HEK293 (cell line): ENCODE measurements at regions of chr7 and their contacts with region 1.

Region 1: DNA sequence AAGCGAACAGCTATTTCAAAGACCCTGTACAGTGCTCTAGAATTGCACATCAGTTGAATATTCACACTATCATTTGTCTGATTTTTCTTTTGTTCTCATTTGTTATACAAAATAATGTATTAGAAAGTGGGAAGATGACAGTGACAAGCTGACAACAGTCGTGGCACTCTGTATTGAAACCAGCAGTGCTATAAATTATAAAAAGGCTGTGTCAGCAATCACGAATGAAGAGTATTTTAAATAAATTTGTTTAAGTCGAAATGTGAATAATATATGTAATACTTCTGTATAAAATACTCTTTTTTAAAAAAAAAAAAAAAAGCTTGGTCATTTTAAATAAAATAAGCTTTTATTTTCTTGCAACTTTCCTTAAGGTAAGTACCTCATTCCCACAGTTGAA is 122.6 kb downstream of the VPS50 start:
- H3K4me3 ChIP-seq: no peak overlapping the region
- H3K27ac ChIP-seq: no peak overlapping the region
- H3K4me1 ChIP-seq: peaks cover 4% of the 10 kb centered on the region
- CTCF ChIP-seq: no peak

Region 2: DNA sequence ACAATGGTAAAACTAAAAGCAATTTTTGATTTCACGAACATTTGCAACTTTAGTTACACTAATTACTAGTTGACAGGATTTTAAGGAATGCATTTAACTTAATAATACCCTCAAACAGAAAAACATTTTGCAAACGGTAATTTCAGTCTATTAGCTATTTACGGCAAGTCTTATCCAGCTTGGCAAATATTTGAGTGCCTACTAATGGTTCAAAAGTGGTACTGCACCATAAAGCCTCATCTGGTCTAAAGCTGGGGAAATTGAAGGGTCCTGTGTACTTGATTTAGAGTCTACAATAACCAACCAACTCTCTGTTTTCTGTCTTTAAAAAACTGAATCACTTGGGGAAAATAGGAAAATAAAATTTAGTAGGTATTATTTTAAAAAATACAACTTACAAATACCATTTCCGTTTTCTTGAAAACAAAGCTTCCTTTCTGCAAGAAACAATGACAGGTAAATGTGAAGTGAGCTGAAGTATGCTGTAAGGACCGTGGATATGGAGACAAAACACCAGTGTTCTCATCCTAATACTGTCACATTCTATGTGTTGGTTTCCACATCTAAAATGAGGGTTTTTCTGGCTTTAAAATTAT is 19.6 kb after region 1 on chr7:
- CTCF ChIA-PET with region 1: interaction called, 10 read pairs
- POLR2A ChIA-PET with region 1: no interaction called
- H3K4me3 ChIP-seq: no peak overlapping the region
- H3K27ac ChIP-seq: no peak overlapping the region
- H3K4me1 ChIP-seq: no peaks in the 10 kb centered on the region
- CTCF ChIP-seq: 0 out of 2 replicates have a peak, but pooled peaks have one; percentile 44